ENCODE measurements at regions of chr20 and their contacts with region 1.

Region 1: DNA sequence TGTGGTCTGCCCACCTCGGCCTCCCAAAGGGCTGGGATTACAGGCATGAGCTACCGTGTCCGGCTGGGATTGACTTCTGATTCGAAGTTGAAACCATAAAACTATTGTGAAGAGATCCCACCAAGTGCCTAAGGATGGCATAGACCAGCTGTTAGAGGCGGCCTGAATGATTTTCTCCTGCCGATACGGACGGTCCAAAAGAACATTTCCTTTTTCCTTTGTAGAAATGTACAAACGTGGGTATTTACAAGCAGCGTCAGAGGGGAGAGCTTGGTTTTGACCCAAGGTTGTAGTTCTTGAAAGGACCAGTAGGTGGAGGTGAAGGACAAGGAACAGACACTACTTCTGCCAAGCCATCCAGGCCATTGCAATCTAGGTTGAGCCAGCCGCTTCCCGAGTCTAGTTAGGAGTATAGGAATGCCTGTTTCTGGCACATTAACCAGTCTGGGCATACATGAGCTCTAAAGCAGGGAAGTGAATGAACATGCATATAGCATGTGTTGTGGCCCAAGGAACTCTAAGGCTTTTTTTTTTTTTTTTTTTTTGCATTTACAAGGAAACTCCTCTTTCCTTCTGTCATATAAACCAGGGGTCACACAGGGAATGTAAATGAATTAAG is 29.1 kb downstream of the MOCS3 start:
- DNase-seq: peak; percentile 91 to 96
- H3K4me3 ChIP-seq: no peak overlapping the region
- H3K4me3 Mint-ChIP-seq: no peak overlapping the region
- H3K27ac Mint-ChIP-seq: no peak overlapping the region
- H3K4me1 ChIP-seq: no peaks in the 10 kb centered on the region
- H3K4me1 Mint-ChIP-seq: peaks cover 14% of the 10 kb centered on the region
- H3K27me3 ChIP-seq: no peaks in the 10 kb centered on the region
- H3K27me3 Mint-ChIP-seq: peaks cover 9% of the 10 kb centered on the region
- CTCF ChIP-seq: peak; percentile 97 to 99

Region 2: GRCh38 chr20:51001758-51002157 is 14.1 kb after region 1 on chr20:
- CTCF ChIA-PET with region 1: interaction called, 14 read pairs
- POLR2A ChIA-PET with region 1: no interaction called
- intact Hi-C with region 1: no loop called
- DNase-seq: no peak
- H3K4me3 ChIP-seq: no peak overlapping the region
- H3K4me3 Mint-ChIP-seq: no peak overlapping the region
- H3K27ac Mint-ChIP-seq: no peak overlapping the region
- H3K4me1 ChIP-seq: no peaks in the 10 kb centered on the region
- H3K4me1 Mint-ChIP-seq: no peaks in the 10 kb centered on the region
- H3K27me3 ChIP-seq: peaks cover 8% of the 10 kb centered on the region
- H3K27me3 Mint-ChIP-seq: peaks cover 39% of the 10 kb centered on the region
- CTCF ChIP-seq: no peak

Region 3: GRCh38 chr20:51172974-51173397 is 185.3 kb after region 1 on chr20:
- CTCF ChIA-PET with region 1: interaction called, 10 read pairs
- POLR2A ChIA-PET with region 1: no interaction called
- intact Hi-C with region 1: no loop called
- DNase-seq: peak in 1 of 2 experiments; percentile 46
- H3K4me3 ChIP-seq: no peak overlapping the region
- H3K4me3 Mint-ChIP-seq: no peak overlapping the region
- H3K27ac Mint-ChIP-seq: no peak overlapping the region
- H3K4me1 ChIP-seq: no peaks in the 10 kb centered on the region
- H3K4me1 Mint-ChIP-seq: no peaks in the 10 kb centered on the region
- H3K27me3 ChIP-seq: no peaks in the 10 kb centered on the region
- H3K27me3 Mint-ChIP-seq: peaks cover 21% of the 10 kb centered on the region
- CTCF ChIP-seq: no peak

Region 4: DNA sequence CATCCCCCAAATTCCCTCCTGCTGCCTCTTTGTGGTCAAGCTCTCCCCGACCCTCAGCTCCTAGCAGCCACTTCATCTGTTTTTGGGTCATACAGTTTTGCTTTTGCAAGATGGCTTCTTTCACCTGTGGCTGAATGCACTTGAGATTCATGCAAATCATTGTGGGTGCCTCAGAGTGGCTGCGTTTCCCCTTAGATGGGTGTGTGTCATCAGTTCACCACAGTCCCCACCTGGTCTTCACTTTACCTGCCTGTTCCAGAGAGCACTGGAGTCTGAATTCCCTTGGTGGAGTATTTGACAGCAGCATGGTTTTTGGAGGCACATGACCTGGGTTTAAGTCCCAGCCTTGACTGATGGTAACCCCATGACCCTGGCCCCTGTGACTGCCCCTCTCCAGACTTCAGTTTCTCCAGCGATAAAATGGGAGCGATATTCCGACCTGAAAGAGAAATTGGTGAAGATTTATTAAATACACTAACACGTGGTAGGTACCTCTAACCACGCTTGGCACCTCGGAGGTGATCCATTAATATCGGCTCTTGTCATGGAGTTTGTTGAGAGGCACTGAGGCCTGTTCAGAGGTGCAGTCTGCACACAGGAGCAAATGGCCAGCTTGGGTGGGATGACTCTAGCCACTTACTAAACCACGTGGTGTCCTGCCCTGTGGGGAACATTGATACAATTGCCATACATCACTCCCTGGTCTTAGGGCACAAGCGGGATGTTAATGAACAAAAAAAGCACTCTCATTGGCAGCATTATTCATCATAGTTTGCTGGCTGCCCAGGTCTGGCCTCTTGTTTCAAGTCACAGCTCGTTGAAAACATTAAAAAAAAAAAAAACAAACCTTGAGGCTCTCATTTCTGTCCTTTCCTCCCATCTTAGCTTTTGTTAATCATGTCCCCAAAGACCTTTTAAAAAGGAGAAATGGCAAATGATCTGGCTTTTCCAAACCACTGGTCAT is 202.4 kb after region 1 on chr20:
- CTCF ChIA-PET with region 1: no interaction called
- POLR2A ChIA-PET with region 1: no interaction called
- intact Hi-C with region 1: no loop called
- DNase-seq: no peak
- H3K4me3 ChIP-seq: no peak overlapping the region
- H3K4me3 Mint-ChIP-seq: no peak overlapping the region
- H3K27ac Mint-ChIP-seq: no peak overlapping the region
- H3K4me1 ChIP-seq: peaks cover 14% of the 10 kb centered on the region; the same call in 1 of the 2 replicates
- H3K4me1 Mint-ChIP-seq: no peaks in the 10 kb centered on the region
- H3K27me3 ChIP-seq: no peaks in the 10 kb centered on the region
- H3K27me3 Mint-ChIP-seq: peaks cover 3% of the 10 kb centered on the region
- CTCF ChIP-seq: no peak

Region 5: DNA sequence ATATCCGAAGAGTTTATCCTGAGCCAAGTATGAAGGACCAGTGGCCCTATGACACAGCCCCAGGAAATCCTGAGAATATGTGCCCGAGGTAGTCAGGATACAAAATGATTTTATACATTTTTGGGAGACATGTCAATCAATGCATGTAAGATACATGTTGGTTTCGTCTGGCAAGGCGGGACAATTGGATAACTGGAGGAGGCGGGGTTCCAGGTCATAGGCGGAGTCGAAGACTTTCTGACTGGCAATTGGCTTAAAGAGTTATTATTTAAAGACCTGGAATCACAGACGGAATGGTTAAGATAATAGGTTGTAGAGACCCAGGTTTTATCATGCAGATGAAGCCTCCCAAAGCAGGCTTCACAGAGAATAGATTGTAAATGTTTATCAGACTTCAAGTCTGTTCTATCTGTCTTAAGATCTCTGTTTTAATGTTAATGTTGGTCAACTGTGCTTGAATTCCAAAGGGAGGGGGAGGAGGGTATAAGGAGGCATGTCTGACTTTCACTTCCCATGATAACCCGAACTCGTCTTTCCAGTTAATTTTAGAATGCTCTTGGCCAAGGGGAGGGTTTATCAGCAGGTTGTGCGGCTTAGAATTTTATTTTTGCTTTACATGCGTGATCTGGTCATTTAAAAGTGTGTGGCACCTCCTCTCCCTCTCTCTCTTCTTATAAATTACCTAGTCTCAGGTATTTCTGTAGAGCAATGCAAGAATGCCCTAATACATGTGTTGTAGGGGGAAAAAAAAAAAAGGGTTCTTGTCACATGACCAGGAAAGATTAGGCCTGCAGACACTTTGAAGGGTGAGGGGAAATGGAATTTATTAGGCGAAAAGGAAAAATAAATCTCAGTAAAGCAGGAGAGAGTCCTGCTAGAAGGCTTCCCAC is 324.1 kb after region 1 on chr20:
- CTCF ChIA-PET with region 1: interaction called, 108 read pairs
- POLR2A ChIA-PET with region 1: interaction called, 3 read pairs
- intact Hi-C with region 1: no loop called
- DNase-seq: peak in 1 of 2 experiments; percentile 77
- H3K4me3 ChIP-seq: no peak overlapping the region
- H3K4me3 Mint-ChIP-seq: peak overlapping the region; percentile 60
- H3K27ac Mint-ChIP-seq: peak overlapping the region; percentile 48
- H3K4me1 ChIP-seq: peaks cover 21% of the 10 kb centered on the region
- H3K4me1 Mint-ChIP-seq: peaks cover 30% of the 10 kb centered on the region
- H3K27me3 ChIP-seq: no peaks in the 10 kb centered on the region
- H3K27me3 Mint-ChIP-seq: no peaks in the 10 kb centered on the region
- CTCF ChIP-seq: no peak

Region 6: DNA sequence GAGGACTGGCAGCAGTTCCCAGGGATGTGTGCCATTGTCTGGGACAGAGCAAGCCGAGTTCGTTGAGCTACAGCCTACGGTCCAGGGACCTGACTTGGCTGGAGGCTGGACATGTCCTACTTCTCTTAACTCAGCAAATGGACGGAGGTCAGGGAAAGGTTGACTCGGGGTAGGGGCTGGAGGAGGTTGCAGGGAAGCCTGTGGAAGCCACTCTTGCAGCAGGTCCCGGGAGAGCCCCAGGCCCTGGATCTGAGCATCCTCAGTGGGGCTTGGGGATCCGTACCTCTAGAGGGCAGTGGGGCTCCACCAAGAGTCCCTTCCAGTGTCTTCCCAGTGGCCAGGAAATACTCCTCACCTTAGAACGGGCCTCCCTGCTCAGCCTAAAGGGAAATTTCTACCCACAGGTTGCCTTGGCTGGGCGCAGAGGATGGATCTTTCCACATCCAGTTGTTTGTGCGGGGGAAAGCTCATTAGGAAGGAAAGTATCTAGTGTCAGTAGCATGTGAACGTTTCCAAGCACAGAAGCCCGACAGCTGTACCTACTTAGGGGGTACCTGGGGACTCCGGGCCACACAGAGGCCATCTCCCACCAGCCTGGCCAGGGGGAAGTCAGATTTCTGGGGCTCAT is 384.6 kb after region 1 on chr20:
- CTCF ChIA-PET with region 1: interaction called, 8 read pairs
- POLR2A ChIA-PET with region 1: no interaction called
- intact Hi-C with region 1: loop called (anchors 1 kb)
- DNase-seq: peak; percentile 88 to 92
- H3K4me3 ChIP-seq: no peak overlapping the region
- H3K4me3 Mint-ChIP-seq: no peak overlapping the region
- H3K27ac Mint-ChIP-seq: no peak overlapping the region
- H3K4me1 ChIP-seq: peaks cover 14% of the 10 kb centered on the region
- H3K4me1 Mint-ChIP-seq: peaks cover 12% of the 10 kb centered on the region
- H3K27me3 ChIP-seq: no peaks in the 10 kb centered on the region
- H3K27me3 Mint-ChIP-seq: peaks cover 6% of the 10 kb centered on the region
- CTCF ChIP-seq: peak; percentile 99

Region 7: DNA sequence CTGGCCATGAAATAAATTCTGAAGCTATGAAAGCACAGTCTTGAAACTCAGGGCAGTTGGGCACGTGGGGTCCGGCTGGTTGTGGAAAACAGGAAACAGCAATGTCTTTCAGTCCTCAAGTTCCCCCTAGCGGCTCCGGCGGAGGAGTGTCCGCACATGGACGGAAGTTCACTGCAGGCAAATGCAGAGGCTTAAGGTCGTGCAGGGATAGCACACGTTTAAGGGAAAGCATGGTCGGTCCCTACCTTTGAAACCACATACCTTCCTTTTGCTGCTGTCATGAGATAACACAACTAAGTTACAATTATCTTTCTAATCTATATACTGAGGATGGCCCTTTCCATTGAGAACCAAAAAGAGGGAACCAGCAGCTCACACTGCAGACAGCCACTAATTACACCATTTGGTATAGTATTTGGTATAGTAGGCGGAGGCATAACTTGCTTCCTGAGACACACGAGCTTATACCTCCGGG is 607.4 kb after region 1 on chr20:
- CTCF ChIA-PET with region 1: interaction called, 31 read pairs
- POLR2A ChIA-PET with region 1: interaction called, 8 read pairs
- intact Hi-C with region 1: loop called (anchors 2 kb)
- DNase-seq: peak; percentile 94 to 95
- H3K4me3 ChIP-seq: no peak overlapping the region
- H3K4me3 Mint-ChIP-seq: peak overlapping the region; percentile 10
- H3K27ac Mint-ChIP-seq: no peak overlapping the region
- H3K4me1 ChIP-seq: peaks cover 6% of the 10 kb centered on the region
- H3K4me1 Mint-ChIP-seq: peaks cover 6% of the 10 kb centered on the region
- H3K27me3 ChIP-seq: no peaks in the 10 kb centered on the region
- H3K27me3 Mint-ChIP-seq: no peaks in the 10 kb centered on the region
- CTCF ChIP-seq: peak; percentile 98 to 100

Measured in Caco-2 (cell line).